CD4-positive, alpha-beta memory T cell (primary cell): ENCODE measurements at regions of chr9 and their contacts with region 1.

Region 1: DNA sequence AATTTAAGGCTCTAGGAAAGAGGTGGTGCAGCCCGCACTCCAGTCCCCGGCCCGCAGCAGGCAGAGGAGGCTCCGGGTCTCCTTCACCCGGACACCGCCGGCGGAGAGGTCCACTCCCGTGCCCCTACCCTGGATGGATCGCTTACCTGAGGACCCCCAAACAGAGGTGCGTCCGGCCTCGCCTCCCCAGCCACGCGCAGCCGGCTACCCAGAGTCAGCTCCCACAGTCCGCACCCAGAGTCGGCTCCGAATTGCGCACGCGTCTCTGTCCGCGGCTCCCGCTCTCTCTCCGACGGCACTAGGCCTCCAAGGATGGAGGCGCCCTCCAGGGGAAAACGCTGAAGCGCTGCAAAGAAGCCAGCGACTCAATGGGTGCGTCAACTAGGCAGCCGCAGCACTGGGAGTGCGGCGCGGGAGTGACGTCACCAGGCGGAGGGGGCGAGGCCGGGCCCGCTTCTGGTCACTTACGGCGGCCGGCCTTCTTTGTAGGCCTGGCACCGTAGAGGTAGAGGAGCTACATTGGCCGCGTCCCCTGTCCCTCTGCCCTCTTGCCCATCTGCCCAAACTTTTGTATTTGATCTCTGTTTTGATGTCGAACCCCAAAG is at the start of gene ELP1:
- DNase-seq: peak; percentile 91 to 95 (median 93)
- H3K4me3 ChIP-seq: peak within 1 kb of the TSS; percentile 78 to 100
- H3K4me3 Mint-ChIP-seq: peak within 1 kb of the TSS; percentile 99 to 100 (median 99)
- H3K27ac ChIP-seq: peak within 1 kb of the TSS; percentile 83
- H3K27ac Mint-ChIP-seq: peak within 1 kb of the TSS; percentile 91 to 99 (median 99)
- H3K4me1 ChIP-seq: peaks cover 26% of the 10 kb centered on the region
- H3K4me1 Mint-ChIP-seq: peaks cover 28 to 47% (median 38%) of the 10 kb centered on the region in 4 donors
- H3K27me3 ChIP-seq: no peaks in the 10 kb centered on the region
- H3K27me3 Mint-ChIP-seq: no peaks in the 10 kb centered on the region
- total RNA-seq, gene ELP1: 29.4 to 32.3 TPM

Region 2: GRCh38 chr9:108978205-108978604 is 44.4 kb after region 1 on chr9:
- CTCF ChIA-PET with region 1: no interaction called
- POLR2A ChIA-PET with region 1: no interaction called
- intact Hi-C with region 1: no loop called
- DNase-seq: no peak
- H3K4me3 ChIP-seq: no peak overlapping the region
- H3K4me3 Mint-ChIP-seq: no peak overlapping the region
- H3K27ac ChIP-seq: no peak overlapping the region
- H3K27ac Mint-ChIP-seq: peak overlapping the region in 1 of 7 donors; percentile 6
- H3K4me1 ChIP-seq: no peaks in the 10 kb centered on the region
- H3K4me1 Mint-ChIP-seq: no peaks in the 10 kb centered on the region
- H3K27me3 ChIP-seq: no peaks in the 10 kb centered on the region
- H3K27me3 Mint-ChIP-seq: no peaks in the 10 kb centered on the region

Region 3: GRCh38 chr9:109012876-109013678 is 79.3 kb after region 1 on chr9 and contains the start of gene CTNNAL1:
- CTCF ChIA-PET with region 1: no interaction called
- POLR2A ChIA-PET with region 1: no interaction called
- intact Hi-C with region 1: loop called (anchors 1 kb)
- DNase-seq: peak; percentile 82 to 91 (median 83)
- H3K4me3 ChIP-seq: peak within 1 kb of the TSS; percentile 66
- H3K4me3 Mint-ChIP-seq: peak within 1 kb of the TSS; percentile 93 to 100 (median 96)
- H3K27ac ChIP-seq: peak within 1 kb of the TSS; percentile 61
- H3K27ac Mint-ChIP-seq: peak within 1 kb of the TSS; percentile 93 to 99 (median 95)
- H3K4me1 ChIP-seq: peaks cover 13% of the 10 kb centered on the region
- H3K4me1 Mint-ChIP-seq: peaks cover 17 to 31% (median 28%) of the 10 kb centered on the region in 4 donors
- H3K27me3 ChIP-seq: no peaks in the 10 kb centered on the region
- H3K27me3 Mint-ChIP-seq: no peaks in the 10 kb centered on the region
- total RNA-seq, gene CTNNAL1: 2.6 to 3.3 TPM